Ascending aorta (tissue), 2 donors: ENCODE measurements at regions of chr12 and their contacts with region 1.

Region 1: DNA sequence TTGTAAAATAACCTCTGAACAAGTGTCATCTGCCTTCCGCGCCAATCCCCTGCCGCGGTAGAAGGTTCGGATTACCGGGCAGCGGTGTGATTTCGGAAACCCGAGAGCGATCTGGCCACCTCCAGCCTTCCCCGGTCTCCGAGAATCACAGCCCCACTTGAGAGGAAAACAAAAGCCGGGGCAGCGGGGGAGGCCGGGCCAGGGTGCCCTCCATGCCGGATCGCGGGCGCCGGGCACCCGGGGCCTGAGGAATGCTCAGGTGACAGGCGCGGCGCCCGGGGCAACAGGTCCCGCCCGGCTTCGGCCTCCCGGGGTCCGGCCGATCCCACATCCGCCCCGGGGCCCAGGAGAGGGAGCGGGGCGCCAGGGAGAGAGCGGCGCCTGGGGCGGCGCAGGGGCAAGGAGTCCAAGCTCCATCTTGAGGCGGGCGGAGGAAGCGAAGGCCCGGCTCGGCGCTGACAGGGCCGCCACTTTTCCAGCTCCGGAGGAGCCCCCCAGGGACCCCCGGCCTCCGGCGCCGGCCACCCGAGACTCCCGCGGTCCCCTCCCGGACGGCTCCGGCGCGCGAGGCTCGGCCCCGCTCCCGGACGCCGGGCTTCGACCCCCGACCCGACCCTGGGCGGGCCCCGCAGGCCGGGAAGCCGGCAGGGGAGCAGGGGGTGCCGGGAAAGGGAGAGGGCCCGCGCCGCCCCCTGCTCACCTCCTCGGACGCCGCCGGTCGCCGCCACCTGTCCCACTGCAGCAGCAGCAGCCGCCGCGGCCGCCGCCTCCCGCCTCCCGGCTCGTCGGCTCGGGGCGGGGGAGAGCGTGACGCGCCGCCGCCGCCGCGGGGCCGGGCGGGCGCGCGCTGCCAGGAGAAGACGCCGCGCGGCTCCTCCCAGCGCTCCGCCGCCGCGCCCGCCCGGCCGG is at the start of gene CLIP1:
- DNase-seq: peak in 1 of 2 donors; percentile 81
- H3K4me3 ChIP-seq: peak within 1 kb of the TSS; percentile 95 to 98
- H3K27ac ChIP-seq: peak within 1 kb of the TSS; percentile 99 to 100
- H3K4me1 ChIP-seq: peaks cover 5 to 19% of the 10 kb centered on the region in 2 donors
- H3K27me3 ChIP-seq: no peaks in the 10 kb centered on the region
- CTCF ChIP-seq: peak; percentile 42 to 53 (median 44)
- total RNA-seq, gene CLIP1: 44.7 TPM

Region 2: DNA sequence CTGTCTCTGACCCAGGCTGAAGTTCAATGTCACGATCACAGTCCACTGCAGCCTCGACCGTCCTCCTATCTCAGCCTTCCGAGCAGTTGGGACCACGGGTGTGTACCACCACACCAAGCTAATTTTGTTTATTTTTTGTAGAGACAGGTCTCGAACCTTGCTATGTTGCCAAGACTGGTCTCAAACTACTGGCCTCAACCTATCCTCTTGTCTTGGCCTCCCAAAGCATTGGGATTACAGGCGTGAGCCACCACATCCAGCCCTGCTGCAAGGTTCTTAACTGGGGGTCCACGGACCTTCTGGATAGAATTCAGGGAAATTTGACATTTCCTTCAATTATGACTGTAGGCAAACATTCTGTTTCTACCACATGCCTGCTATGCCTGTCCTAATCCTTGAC is 41.7 kb after region 1 on chr12:
- intact Hi-C with region 1: loop called (anchors 2 kb)
- DNase-seq: peak in 1 of 2 donors; percentile 24
- H3K4me3 ChIP-seq: no peak overlapping the region
- H3K27ac ChIP-seq: peak overlapping the region; percentile 48 to 67
- H3K4me1 ChIP-seq: no peaks in the 10 kb centered on the region
- H3K27me3 ChIP-seq: no peaks in the 10 kb centered on the region
- CTCF ChIP-seq: no peak